CD8-positive, alpha-beta T cell (primary cell): ENCODE measurements at regions of chr9 and their contacts with region 1.

Region 1: GRCh38 chr9:99921875-99922710 is 15.6 kb downstream of the STX17 start:
- DNase-seq: no peak
- ATAC-seq: no peak
- H3K4me3 ChIP-seq: no peak overlapping the region
- H3K4me3 Mint-ChIP-seq: no peak overlapping the region
- H3K27ac ChIP-seq: no peak overlapping the region
- H3K27ac Mint-ChIP-seq: peak overlapping the region; percentile 34
- H3K4me1 ChIP-seq: peaks cover 11% of the 10 kb centered on the region
- H3K4me1 Mint-ChIP-seq: peaks cover 51% of the 10 kb centered on the region
- H3K27me3 ChIP-seq: no peaks in the 10 kb centered on the region
- H3K27me3 Mint-ChIP-seq: no peaks in the 10 kb centered on the region
- CTCF ChIP-seq: no peak

Region 2: GRCh38 chr9:99211741-99212140 is 710.4 kb before region 1 on chr9:
- CTCF ChIA-PET with region 1: no interaction called
- POLR2A ChIA-PET with region 1: no interaction called
- intact Hi-C with region 1: loop called in 1 of 2 experiments (anchors 5 kb)
- DNase-seq: no peak
- ATAC-seq: no peak
- H3K4me3 ChIP-seq: no peak overlapping the region
- H3K4me3 Mint-ChIP-seq: no peak overlapping the region
- H3K27ac ChIP-seq: no peak overlapping the region
- H3K27ac Mint-ChIP-seq: no peak overlapping the region
- H3K4me1 ChIP-seq: no peaks in the 10 kb centered on the region
- H3K4me1 Mint-ChIP-seq: peaks cover 5% of the 10 kb centered on the region
- H3K27me3 ChIP-seq: no peaks in the 10 kb centered on the region
- H3K27me3 Mint-ChIP-seq: no peaks in the 10 kb centered on the region
- CTCF ChIP-seq: no peak

Region 3: GRCh38 chr9:99601571-99602111 is 320.5 kb before region 1 on chr9:
- CTCF ChIA-PET with region 1: no interaction called
- POLR2A ChIA-PET with region 1: no interaction called
- intact Hi-C with region 1: no loop called
- DNase-seq: no peak
- ATAC-seq: no peak
- H3K4me3 ChIP-seq: no peak overlapping the region
- H3K4me3 Mint-ChIP-seq: no peak overlapping the region
- H3K27ac ChIP-seq: no peak overlapping the region
- H3K27ac Mint-ChIP-seq: no peak overlapping the region
- H3K4me1 ChIP-seq: no peaks in the 10 kb centered on the region
- H3K4me1 Mint-ChIP-seq: no peaks in the 10 kb centered on the region
- H3K27me3 ChIP-seq: no peaks in the 10 kb centered on the region
- H3K27me3 Mint-ChIP-seq: peaks cover 7% of the 10 kb centered on the region
- CTCF ChIP-seq: no peak